ENCODE measurements at regions of chr7 and their contacts with region 1.

Region 1: DNA sequence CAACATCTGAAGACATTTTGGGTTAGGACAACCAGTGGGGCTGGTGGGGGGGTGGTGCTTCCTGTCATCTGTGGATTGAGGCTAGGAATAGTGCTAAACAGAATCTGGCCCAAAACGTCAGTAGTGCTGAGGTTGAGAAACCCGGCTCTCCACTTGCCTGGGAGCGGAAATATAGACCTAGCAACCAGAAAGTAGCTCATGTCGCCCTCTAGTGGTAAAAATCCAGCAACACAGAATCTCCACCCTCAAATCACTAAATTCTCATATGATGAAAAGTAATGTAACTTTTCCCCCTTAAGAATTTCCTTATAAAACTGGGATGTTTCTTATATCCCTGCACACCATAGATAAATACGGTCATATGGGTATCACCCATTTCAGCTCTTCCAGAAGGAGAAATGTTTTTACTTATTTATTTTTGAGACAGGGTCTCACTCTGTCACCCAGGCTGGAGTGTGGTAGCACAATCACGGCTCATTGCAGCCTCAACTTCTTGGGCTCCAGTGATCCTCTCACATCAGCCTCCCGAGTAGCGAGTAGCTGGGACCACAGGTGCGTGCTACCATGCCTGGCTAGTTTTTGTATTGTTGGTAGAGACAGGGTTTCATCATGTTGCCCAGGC is 34.4 kb downstream of the ZC3HAV1 start:
- DNase-seq: peak; percentile 65
- H3K4me3 ChIP-seq: no peak overlapping the region
- H3K27ac ChIP-seq: no peak overlapping the region
- H3K27me3 ChIP-seq: no peaks in the 10 kb centered on the region
- CTCF ChIP-seq: peak; percentile 76

Region 2: DNA sequence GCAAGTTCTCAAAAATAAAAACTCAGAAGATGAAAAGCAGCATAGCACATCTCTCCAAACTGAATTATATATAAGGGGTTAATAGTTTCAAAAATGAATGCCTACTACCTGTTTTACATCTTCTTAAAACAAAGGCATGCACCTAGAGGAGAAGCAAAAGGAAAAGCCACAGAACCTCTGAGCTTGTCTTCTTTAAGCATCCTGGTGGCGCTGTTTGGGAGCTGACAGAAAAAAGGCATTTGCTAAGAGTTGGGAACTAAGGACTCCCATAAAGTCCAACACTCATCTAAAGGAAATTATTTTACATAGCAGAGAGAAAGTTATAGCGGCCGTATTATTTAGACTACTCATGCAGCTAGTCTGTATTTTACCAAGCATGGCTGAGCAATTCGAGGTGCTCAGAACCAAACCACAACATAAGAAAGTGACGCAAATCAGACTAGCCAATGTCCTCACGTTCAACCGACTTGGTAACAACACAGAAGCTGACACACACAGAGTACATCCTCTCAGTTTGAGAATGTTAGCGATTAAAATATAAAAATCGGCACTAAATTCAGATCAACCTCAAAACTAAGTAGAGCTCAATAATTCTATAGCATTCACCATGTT is 1770.4 kb before region 1 on chr7:
- CTCF ChIA-PET with region 1: no interaction called
- POLR2A ChIA-PET with region 1: no interaction called
- DNase-seq: peak; percentile 37
- H3K4me3 ChIP-seq: peak overlapping the region; percentile 17
- H3K27ac ChIP-seq: no peak overlapping the region
- H3K27me3 ChIP-seq: no peaks in the 10 kb centered on the region
- CTCF ChIP-seq: peak; percentile 19; the same call in 1 of the 2 replicates

Region 3: DNA sequence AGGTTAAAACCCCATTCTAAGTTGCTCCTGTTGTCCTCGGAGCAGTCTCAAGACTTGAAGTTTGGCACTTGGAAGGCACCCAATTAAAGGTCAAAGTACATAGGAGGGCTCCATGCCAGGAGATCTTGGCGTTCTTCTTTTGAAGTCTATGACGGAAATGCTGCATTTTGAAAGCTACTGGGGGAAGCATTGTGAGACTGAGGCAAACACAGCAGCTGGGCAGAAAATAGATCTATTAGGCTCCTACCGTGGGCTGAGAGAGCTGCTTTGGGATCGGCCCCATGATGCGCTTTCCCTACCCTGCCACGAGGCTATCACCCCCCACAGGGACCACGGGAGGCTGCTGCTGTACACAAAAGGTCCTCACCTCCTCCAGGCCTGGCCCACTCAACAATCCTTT is 114.0 kb before region 1 on chr7:
- CTCF ChIA-PET with region 1: no interaction called
- POLR2A ChIA-PET with region 1: no interaction called
- DNase-seq: no peak
- H3K4me3 ChIP-seq: no peak overlapping the region
- H3K27ac ChIP-seq: no peak overlapping the region
- H3K27me3 ChIP-seq: no peaks in the 10 kb centered on the region
- CTCF ChIP-seq: no peak

Region 4: DNA sequence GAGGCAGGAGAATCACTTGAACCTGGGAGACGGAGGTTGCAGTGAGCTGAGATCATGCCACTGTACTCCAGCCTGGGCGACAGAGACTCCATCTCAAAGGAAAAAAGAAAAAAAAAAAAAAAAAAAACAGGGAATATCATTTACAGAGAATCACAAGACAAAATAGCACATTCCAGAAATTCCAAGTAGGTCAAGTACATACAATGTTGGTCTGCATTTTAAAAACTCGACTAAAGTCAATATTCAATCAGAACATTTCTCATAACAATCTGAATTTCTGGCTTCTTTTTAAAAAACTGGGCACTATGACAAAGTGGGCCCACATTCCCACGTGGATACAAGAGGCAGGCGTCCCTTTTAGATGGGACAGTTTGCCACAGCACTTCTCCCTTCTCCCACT is 52.1 kb before region 1 on chr7:
- CTCF ChIA-PET with region 1: interaction called, 103 read pairs
- POLR2A ChIA-PET with region 1: no interaction called
- DNase-seq: no peak
- H3K4me3 ChIP-seq: no peak overlapping the region
- H3K27ac ChIP-seq: no peak overlapping the region
- H3K27me3 ChIP-seq: no peaks in the 10 kb centered on the region
- CTCF ChIP-seq: no peak

Region 5: DNA sequence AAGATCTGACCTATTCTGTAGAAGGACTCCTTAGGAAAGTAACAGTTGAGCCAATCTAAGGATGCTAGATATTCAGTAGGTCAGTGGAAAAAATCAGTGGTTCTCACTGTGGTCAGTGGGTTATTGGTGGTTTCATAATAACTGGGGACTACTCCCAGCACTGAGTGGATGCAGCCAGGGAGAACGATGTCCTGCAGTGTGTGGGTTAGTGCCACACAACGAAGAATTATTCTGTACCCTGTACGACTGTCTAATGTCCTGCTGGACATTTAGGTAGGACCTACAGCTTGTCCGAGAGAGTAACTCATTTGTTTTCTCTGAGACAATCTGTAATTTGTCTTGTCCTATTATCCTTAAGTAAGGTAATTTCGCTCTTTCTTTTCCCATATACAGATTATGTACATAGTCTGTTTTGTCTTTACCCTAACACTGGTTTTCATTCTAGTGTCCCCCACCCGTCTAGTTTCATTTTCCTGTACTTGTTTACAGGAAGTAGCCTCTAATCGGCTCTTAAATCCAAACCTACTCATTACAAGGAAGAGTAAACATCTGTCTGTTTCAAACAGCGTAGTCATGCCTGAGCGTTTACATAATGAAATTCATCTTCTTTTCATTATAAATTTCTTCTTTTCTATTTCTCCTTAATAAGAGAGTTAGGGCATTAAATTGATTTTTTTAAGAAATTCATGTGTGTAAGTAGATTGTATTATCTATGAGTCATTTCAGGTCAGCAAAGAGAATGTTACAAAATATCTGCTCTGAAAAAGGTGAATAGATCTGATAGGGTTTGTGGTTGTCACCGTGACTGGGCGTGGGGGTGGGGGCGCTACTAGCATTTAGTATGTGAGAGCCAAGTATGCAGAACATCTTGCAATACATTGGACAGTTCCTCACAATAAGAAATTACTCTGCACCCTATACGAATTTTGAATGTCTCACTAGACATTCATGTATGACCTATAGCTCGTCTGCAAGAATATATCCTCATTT is 31.0 kb before region 1 on chr7:
- CTCF ChIA-PET with region 1: interaction called, 14 read pairs
- POLR2A ChIA-PET with region 1: no interaction called
- DNase-seq: peak; percentile 8
- H3K4me3 ChIP-seq: no peak overlapping the region
- H3K27ac ChIP-seq: no peak overlapping the region
- H3K27me3 ChIP-seq: no peaks in the 10 kb centered on the region
- CTCF ChIP-seq: no peak

Region 6: GRCh38 chr7:139086454-139086853 is 11.3 kb after region 1 on chr7:
- CTCF ChIA-PET with region 1: interaction called, 48 read pairs
- POLR2A ChIA-PET with region 1: no interaction called
- DNase-seq: no peak
- H3K4me3 ChIP-seq: no peak overlapping the region
- H3K27ac ChIP-seq: no peak overlapping the region
- H3K27me3 ChIP-seq: no peaks in the 10 kb centered on the region
- CTCF ChIP-seq: no peak

Region 7: DNA sequence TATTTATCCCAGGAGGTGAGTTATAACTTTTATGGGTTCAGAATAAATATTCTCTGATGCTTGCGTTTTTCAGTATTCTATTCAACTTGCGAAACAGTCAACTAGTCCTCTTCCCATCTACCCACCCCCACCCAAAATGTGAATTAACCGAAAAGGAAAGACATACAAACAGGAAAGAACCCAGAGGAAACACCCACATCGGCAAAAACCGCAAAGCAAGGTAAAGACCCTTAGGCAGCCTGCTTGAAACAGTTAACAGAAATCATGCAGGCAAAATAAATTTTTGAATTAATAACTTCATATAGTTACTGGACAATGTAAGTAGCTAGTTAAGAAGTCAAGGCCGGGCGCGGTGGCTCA is 28.9 kb after region 1 on chr7:
- CTCF ChIA-PET with region 1: interaction called, 15 read pairs
- POLR2A ChIA-PET with region 1: no interaction called
- DNase-seq: no peak
- H3K4me3 ChIP-seq: no peak overlapping the region
- H3K27ac ChIP-seq: no peak overlapping the region
- H3K27me3 ChIP-seq: no peaks in the 10 kb centered on the region
- CTCF ChIP-seq: no peak